Dorsolateral prefrontal cortex (tissue), 120 donors: ENCODE measurements at regions of chr1 and their contacts with region 1.

Region 1: GRCh38 chr1:6602669-6603237 is at the start of gene KLHL21:
- DNase-seq: peak; percentile 70 to 96 (median 87)
- H3K4me3 ChIP-seq: peak within 1 kb of the TSS; percentile 58 to 99 (median 91)
- H3K27ac ChIP-seq: peak within 1 kb of the TSS; percentile 91 to 100 (median 98)
- H3K27me3 ChIP-seq: no peaks in the 10 kb centered on the region
- CTCF ChIP-seq: peak in 9 of 56 donors; percentile 2 to 30 (median 17)
- total RNA-seq, gene KLHL21: 36.4 to 92.8 (median 52.5) TPM

Region 2: DNA sequence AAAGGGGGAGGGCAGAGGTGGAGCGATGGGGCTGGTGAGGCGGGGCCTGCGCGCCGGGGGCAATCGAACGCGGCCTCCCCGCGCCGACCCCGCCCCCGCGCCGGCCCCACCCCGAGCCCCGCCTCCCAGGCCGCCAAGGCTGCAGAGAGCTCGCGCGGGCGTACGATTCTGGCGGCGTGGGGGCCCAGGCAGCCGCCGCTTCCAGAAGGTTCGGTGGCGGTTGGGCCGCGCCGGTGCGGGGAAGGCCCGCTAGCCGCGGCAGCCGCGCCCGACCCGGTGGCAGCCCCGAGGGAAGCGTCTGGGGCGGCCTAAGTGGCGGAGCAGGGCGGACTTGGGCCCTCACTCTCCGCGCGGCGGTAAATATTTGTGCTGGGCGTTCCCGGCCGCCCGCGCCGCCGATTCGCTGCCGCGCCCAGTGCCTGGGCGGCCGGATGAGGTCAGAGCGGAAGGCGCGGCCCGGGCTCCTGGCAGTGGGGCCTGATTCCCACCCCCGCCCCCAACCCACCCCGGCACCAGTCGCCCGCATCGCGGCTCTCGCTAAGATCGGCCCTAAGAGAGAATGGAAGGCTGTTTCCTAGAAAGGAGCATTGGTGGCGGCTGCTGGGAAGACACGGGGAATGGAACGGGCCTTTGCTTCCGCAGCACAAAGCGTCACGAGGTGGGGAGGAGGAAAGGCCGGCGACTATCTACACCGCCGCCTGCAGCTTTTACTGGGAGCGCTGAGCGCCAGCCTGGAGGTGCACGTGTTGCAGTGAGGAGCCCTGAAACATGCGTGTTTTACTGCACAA is 209.2 kb before region 1 on chr1 and contains the start of gene ACOT7:
- intact Hi-C with region 1: loop called in 1 of 2 experiments (anchors 10 kb)
- DNase-seq: peak; percentile 80 to 93 (median 88)
- H3K4me3 ChIP-seq: peak within 1 kb of the TSS; percentile 49 to 82 (median 70)
- H3K27ac ChIP-seq: peak within 1 kb of the TSS; percentile 94 to 100 (median 99)
- H3K27me3 ChIP-seq: no peaks in the 10 kb centered on the region
- CTCF ChIP-seq: peak in 49 of 56 donors; percentile 7 to 58 (median 30)
- total RNA-seq, gene ACOT7: 67.4 to 236 (median 171) TPM

Region 3: DNA sequence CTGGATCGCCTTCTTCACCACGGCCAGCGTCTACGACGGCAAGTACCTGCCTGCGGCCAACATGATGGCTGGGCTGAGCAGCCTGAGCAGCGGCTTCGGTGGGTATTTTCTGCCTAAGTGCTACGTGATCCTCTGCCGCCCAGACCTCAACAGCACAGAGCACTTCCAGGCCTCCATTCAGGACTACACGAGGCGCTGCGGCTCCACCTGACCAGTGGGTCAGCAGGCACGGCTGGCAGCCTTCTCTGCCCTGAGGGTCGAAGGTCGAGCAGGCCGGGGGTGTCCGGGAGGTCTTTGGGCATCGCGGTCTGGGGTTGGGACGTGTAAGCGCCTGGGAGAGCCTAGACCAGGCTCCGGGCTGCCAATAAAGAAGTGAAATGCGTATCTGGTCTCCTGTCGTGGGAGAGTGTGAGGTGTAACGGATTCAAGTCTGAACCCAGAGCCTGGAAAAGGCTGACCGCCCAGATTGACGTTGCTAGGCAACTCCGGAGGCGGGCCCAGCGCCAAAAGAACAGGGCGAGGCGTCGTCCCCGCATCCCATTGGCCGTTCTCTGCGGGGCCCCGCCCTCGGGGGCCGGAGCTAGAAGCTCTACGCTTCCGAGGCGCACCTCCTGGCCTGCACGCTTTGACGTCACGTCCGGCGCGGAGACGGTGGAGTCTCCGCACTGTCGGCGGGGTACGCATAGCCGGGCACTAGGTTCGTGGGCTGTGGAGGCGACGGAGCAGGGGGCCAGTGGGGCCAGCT is 23.2 kb before region 1 on chr1 and contains the start of gene ZBTB48:
- intact Hi-C with region 1: loop called in 1 of 2 experiments (anchors 2 kb)
- DNase-seq: peak; percentile 98 to 100 (median 100)
- H3K4me3 ChIP-seq: peak within 1 kb of the TSS; percentile 66 to 99 (median 91)
- H3K27ac ChIP-seq: peak within 1 kb of the TSS; percentile 39 to 97 (median 90)
- H3K27me3 ChIP-seq: no peaks in the 10 kb centered on the region
- CTCF ChIP-seq: peak in 21 of 56 donors; percentile 3 to 44 (median 21)
- total RNA-seq, gene ZBTB48: 19.2 to 51.0 (median 30.1) TPM

Region 4: GRCh38 chr1:6613361-6614018 is 10.7 kb after region 1 on chr1 and contains the start of gene PHF13:
- intact Hi-C with region 1: loop called (anchors 1 kb)
- DNase-seq: peak; percentile 98 to 100 (median 99)
- H3K4me3 ChIP-seq: peak within 1 kb of the TSS; percentile 58 to 98 (median 89)
- H3K27ac ChIP-seq: peak within 1 kb of the TSS; percentile 60 to 99 (median 96)
- H3K27me3 ChIP-seq: no peaks in the 10 kb centered on the region
- CTCF ChIP-seq: peak in 10 of 56 donors; percentile 3 to 33 (median 20)
- total RNA-seq, gene PHF13: 9.4 to 21.9 (median 13.0) TPM